Panc1 (cell line): ENCODE measurements at regions of chr11 and their contacts with region 1.

Region 1: GRCh38 chr11:122853971-122854446 is 15.7 kb downstream of the CRTAM start:
- DNase-seq: peak; percentile 73
- ATAC-seq: peak; percentile 35
- H3K4me3 ChIP-seq: no peak overlapping the region
- H3K27ac ChIP-seq: no peak overlapping the region; the same call in 1 of the 2 replicates
- H3K4me1 ChIP-seq: peaks cover 24% of the 10 kb centered on the region
- H3K27me3 ChIP-seq: no peaks in the 10 kb centered on the region
- CTCF ChIP-seq: peak; percentile 86

Region 2: GRCh38 chr11:122578168-122578825 is 275.7 kb before region 1 on chr11:
- CTCF ChIA-PET with region 1: interaction called, 3 read pairs
- POLR2A ChIA-PET with region 1: no interaction called
- in situ Hi-C with region 1: no loop called
- intact Hi-C with region 1: loop called (anchors 2 kb)
- DNase-seq: no peak
- ATAC-seq: no peak
- H3K4me3 ChIP-seq: no peak overlapping the region
- H3K27ac ChIP-seq: no peak overlapping the region
- H3K4me1 ChIP-seq: no peaks in the 10 kb centered on the region; the same call in 1 of the 2 replicates
- H3K27me3 ChIP-seq: no peaks in the 10 kb centered on the region
- CTCF ChIP-seq: peak; percentile 38

Region 3: GRCh38 chr11:122628810-122629555 is 225.0 kb before region 1 on chr11:
- CTCF ChIA-PET with region 1: interaction called, 9 read pairs
- POLR2A ChIA-PET with region 1: no interaction called
- in situ Hi-C with region 1: no loop called
- intact Hi-C with region 1: loop called (anchors 1 kb)
- DNase-seq: peak; percentile 60
- ATAC-seq: peak; percentile 88
- H3K4me3 ChIP-seq: no peak overlapping the region
- H3K27ac ChIP-seq: no peak overlapping the region
- H3K4me1 ChIP-seq: no peaks in the 10 kb centered on the region
- H3K27me3 ChIP-seq: no peaks in the 10 kb centered on the region
- CTCF ChIP-seq: peak; percentile 96

Region 4: GRCh38 chr11:122781378-122782195 is 72.4 kb before region 1 on chr11:
- CTCF ChIA-PET with region 1: no interaction called
- POLR2A ChIA-PET with region 1: no interaction called
- in situ Hi-C with region 1: no loop called
- intact Hi-C with region 1: loop called (anchors 2 kb)
- DNase-seq: peak; percentile 63
- ATAC-seq: peak; percentile 97
- H3K4me3 ChIP-seq: no peak overlapping the region
- H3K27ac ChIP-seq: no peak overlapping the region
- H3K4me1 ChIP-seq: no peaks in the 10 kb centered on the region
- H3K27me3 ChIP-seq: no peaks in the 10 kb centered on the region
- CTCF ChIP-seq: peak; percentile 97

Region 5: DNA sequence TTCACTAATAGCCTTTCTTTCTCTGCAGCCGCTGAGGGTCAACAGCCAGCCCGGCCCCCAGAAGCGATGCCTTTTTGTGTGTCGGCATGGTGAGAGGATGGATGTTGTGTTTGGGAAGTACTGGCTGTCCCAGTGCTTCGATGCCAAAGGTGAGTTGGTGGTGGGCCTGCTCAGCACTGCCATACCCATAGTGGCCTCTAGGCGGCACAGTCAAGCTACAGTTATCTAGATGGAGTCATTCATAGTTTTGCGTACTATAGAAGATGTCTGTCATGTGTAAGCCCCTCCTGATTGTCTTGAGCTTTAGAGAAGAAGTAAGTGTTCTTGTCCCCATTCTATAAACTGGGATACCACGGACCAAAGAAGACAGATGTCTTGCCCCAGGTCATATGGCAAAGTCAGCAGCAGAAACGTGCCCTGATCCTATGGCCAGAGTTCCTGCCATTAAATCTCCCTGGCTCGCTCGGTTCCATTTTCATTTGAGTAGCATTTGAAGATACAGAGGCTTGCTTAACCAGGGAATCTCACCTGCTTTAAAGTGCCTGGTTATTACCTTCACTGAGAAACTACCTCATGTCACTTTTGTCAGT is 57.8 kb before region 1 on chr11:
- CTCF ChIA-PET with region 1: interaction called, 12 read pairs
- POLR2A ChIA-PET with region 1: interaction called, 7 read pairs
- in situ Hi-C with region 1: no loop called
- intact Hi-C with region 1: no loop called
- DNase-seq: peak; percentile 52
- ATAC-seq: 0 out of 2 replicates have a peak, but pooled peaks have one; percentile 53
- H3K4me3 ChIP-seq: no peak overlapping the region
- H3K27ac ChIP-seq: no peak overlapping the region
- H3K4me1 ChIP-seq: no peaks in the 10 kb centered on the region
- H3K27me3 ChIP-seq: no peaks in the 10 kb centered on the region
- CTCF ChIP-seq: peak; percentile 91

Region 6: DNA sequence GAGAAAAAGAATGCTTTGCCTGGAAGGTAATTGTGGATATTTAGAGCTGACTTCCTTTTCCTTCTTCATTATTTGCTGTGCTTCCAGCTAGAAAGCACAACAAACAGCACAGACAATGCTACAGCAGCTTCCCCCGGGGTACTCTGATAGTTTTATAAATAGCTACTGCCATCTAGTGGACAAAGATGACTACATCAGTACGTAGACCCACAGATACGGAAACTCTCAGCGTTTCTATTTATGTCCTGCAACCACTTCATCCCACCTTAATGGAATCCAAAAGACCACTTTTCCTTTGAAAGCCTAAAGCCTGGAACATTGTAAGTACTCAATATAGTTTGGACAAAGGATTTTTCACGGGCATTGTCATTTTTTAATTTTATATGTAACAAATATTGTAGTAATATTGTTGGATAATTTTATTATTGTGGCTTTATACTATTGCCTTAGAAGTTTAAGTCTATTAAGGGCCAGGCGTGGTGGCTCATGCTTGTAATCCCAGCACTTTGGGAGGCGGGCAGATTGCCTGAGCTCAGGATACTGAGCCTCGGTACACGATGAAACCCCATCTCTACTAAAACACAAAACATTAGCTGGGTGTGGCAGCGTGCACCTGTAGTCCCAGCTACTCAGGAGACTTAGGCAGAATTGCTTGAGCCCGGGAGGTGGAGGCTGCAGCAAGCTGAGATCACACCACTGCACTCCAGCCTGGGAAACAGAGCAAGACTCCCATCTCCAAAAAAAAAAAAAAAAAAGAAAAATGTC is 200.5 kb after region 1 on chr11:
- CTCF ChIA-PET with region 1: interaction called, 12 read pairs
- POLR2A ChIA-PET with region 1: no interaction called
- in situ Hi-C with region 1: no loop called
- intact Hi-C with region 1: no loop called
- DNase-seq: no peak
- ATAC-seq: peak; percentile 82
- H3K4me3 ChIP-seq: no peak overlapping the region
- H3K27ac ChIP-seq: no peak overlapping the region
- H3K4me1 ChIP-seq: peaks cover 21% of the 10 kb centered on the region
- H3K27me3 ChIP-seq: no peaks in the 10 kb centered on the region
- CTCF ChIP-seq: peak; percentile 86

Region 7: DNA sequence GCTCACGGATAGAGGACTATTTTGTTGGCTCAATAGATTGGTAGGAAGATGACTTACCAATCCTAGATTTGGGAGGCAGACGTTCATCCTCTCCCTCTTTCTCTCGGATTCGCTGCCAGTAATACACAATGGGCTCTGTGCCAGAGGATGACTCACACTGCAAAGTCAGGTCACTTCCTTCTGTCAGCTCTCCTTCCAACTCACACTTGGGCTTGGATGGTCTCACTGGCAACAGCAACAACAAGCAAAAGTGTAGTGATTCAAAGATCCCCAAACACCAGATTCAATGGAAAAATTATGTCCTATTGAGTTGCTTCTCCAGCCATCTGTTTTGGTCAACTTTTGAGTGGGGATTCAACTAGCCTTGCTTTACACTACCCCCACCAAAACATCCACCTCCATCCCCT is 229.6 kb after region 1 on chr11:
- CTCF ChIA-PET with region 1: no interaction called
- POLR2A ChIA-PET with region 1: no interaction called
- in situ Hi-C with region 1: no loop called
- intact Hi-C with region 1: no loop called
- DNase-seq: peak; percentile 78
- ATAC-seq: peak; percentile 75
- H3K4me3 ChIP-seq: no peak overlapping the region
- H3K27ac ChIP-seq: no peak overlapping the region
- H3K4me1 ChIP-seq: peaks cover 4% of the 10 kb centered on the region; the same call in 1 of the 2 replicates
- H3K27me3 ChIP-seq: no peaks in the 10 kb centered on the region
- CTCF ChIP-seq: no peak